Upper lobe of right lung (tissue), 1 donor: ENCODE measurements at regions of chr3 and their contacts with region 1.

Region 1: DNA sequence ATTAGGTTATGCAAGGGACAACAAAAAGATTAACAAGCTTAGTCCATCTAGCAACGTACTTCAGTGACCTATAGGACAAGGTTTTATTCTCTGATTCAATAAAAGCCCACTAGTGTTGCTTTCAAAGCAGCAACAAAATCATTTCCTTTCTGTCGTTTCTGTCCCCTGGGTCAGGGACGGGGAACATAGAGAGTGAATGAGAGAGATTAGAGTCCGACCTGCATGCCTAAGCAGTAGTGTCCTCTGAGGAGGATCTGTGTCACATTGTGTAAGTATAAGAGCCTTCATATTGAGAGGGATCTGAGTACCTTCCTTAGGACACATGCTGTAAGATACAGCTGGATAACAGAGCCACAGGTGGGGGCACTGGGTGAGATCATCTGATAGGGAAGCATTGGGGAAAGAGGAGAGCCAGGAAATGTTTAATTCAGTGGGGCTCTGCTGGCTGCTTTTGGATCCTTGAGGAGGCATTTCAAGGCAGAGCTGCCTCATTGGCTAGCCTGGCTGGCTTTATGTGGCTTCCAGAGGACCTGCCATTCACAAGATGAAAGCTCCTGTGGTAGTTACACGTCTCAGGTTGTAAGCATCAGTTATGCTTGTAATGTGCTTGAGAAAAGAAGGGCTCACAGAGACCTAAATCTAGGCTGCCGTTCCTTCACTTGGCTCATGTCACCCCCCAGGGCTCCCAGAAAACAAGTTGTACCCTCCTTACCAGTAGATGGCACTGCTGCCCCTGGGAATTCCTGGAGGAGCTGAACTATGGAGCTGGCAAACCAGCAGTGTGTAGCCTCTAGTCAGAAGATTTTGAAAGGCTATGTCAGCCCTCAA is 2.7 kb downstream of the TMEM108 start:
- DNase-seq: peak; percentile 68
- ATAC-seq: peak; percentile 82
- H3K4me3 ChIP-seq: no peak overlapping the region
- H3K27ac ChIP-seq: peak overlapping the region; percentile 0
- H3K4me1 ChIP-seq: peaks cover 3% of the 10 kb centered on the region
- H3K27me3 ChIP-seq: peaks cover 3% of the 10 kb centered on the region
- CTCF ChIP-seq: peak; percentile 81

Region 2: DNA sequence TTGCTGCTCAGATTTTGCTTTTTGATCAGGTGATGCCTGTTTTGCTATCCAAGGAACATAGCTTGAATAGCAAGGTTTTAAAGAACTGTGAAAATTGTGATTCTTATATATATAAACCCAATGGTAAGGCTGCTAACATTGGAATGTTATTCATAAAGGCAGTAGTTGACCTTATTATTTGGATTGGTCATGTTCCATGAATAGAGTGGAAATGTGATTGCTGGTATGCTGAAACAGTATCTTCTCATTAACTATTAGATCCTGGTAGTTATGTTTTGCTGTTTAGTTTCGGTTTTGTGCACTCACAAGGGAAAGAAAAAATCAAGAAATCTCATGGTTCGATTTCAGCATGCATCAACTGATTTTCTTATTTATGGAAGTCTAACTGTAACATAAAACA is 240.0 kb before region 1 on chr3:
- intact Hi-C with region 1: no loop called
- DNase-seq: no peak
- ATAC-seq: no peak
- H3K4me3 ChIP-seq: no peak overlapping the region
- H3K27ac ChIP-seq: no peak overlapping the region
- H3K4me1 ChIP-seq: peaks cover 16% of the 10 kb centered on the region
- H3K27me3 ChIP-seq: no peaks in the 10 kb centered on the region
- CTCF ChIP-seq: no peak

Region 3: DNA sequence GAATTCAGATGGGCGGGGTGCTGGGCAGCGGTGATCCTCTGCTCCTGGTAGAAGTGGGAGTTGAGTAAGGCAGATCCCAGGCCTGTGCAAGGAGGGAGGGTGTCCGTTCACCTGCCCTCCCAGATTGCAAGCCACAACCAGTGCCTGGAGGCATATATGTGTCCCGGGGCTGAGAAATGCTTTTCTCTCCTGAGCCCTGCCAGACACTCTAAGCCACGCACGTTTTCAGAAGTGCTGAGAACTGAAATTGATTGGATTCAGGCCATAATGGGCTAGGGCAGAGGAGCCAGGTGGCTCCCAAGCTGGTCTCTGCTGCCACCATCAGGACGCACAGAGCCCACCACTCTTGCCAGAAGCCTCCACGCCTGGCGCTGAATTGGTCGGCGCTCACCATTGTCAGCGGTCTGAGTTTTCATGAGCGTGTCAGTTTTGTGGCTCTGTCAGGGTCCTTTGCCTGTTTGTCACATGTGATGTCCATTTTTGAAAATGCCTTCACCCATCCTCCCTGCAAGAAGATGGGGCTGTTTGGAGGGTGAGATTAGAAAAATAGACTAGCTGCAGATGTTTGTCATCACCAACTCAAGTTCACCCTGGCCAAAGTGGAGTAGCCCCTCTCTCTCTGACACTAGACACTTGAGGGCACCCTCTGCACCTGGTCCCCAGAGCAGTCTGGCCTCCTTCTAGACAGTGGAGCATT is 343.6 kb after region 1 on chr3:
- intact Hi-C with region 1: loop called (anchors 5 kb)
- DNase-seq: peak; percentile 82
- ATAC-seq: peak; percentile 83
- H3K4me3 ChIP-seq: no peak overlapping the region
- H3K27ac ChIP-seq: no peak overlapping the region
- H3K4me1 ChIP-seq: peaks cover 5% of the 10 kb centered on the region
- H3K27me3 ChIP-seq: no peaks in the 10 kb centered on the region
- CTCF ChIP-seq: peak; percentile 82